GM12878 (cell line): ENCODE measurements at regions of chr12 and their contacts with region 1.

Region 1: GRCh38 chr12:92408072-92408900 is 262.6 kb upstream of the BTG1 start:
- DNase-seq: no peak
- ATAC-seq: peak; percentile 74
- H3K4me3 ChIP-seq: no peak overlapping the region
- H3K27ac ChIP-seq: peak overlapping the region; percentile 24
- H3K4me1 ChIP-seq: peaks cover 31% of the 10 kb centered on the region
- H3K27me3 ChIP-seq: no peaks in the 10 kb centered on the region
- CTCF ChIP-seq: peak; percentile 58 to 82 (median 72)
- EP300 ChIP-seq: no peak
- POLR2A ChIP-seq: no peak
- RAD21 ChIP-seq: peak; percentile 94

Region 2: DNA sequence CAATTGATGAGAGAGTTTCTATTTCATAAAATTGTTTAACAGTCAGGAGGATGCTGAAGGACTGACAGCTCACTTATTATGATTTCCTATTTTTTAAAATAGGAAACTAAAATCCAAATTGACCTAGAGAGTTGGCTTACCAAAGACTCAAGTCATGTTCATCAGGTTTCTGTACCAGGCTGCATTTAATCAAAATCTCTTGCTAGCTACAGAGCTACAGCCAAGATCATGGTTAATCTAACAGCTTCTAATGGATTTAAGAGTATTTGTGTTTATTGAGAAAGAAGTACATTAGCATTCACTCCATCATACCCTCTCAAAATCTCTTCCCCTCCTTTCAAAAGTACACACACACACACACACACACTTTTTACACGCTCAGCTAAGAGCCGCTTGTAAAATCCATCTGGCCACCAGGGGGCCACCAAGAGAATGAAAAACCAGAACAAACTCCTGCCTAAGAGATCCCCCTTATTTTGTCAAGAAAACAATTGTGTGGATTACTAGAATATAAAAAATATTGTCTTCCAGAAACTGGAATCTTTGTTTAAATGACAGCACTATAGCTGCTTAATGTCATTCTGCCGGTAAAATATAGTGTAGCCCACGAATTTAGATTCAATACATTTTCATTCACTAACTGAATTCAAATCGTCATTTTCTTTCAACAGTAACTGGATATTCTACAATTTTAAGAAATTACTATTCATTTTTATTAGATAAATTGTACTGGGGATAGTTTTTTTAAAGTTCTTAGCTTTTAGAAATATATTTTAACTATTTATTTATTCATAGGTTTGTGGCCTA is 596.6 kb before region 1 on chr12:
- CTCF ChIA-PET with region 1: interaction called, 10 read pairs
- POLR2A ChIA-PET with region 1: no interaction called
- RAD21 ChIA-PET with region 1: interaction called, 10 read pairs
- SMC1A ChIA-PET with region 1: interaction called, 22 read pairs
- in situ Hi-C with region 1: loop called (anchors 10 kb)
- intact Hi-C with region 1: loop called (anchors 5 kb)
- DNase-seq: peak; percentile 40
- ATAC-seq: peak; percentile 95
- H3K4me3 ChIP-seq: no peak overlapping the region
- H3K27ac ChIP-seq: no peak overlapping the region
- H3K4me1 ChIP-seq: no peaks in the 10 kb centered on the region
- H3K27me3 ChIP-seq: no peaks in the 10 kb centered on the region
- CTCF ChIP-seq: peak; percentile 68 to 86 (median 79)
- EP300 ChIP-seq: no peak
- POLR2A ChIP-seq: no peak
- RAD21 ChIP-seq: peak; percentile 87

Region 3: DNA sequence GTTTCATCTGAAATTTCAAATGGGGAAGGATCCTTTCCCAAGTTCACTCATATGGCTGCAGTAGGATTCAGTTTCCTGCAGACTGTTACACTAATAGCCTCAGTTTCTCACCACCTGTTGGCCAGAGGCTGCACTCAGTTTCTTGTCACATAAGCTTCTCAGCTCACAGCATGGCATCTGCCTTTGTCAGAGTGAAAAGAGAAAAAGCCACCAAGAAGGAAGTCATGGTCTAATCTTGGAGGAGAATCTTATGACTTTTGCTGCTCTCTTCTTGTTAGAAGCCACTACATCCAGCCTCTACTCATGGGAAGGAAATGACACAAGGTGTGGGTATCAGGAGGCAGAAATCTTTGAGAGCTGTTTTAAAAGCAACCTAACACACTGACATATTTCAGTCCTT is 223.2 kb before region 1 on chr12:
- CTCF ChIA-PET with region 1: no interaction called
- POLR2A ChIA-PET with region 1: no interaction called
- RAD21 ChIA-PET with region 1: interaction called, 3 read pairs
- SMC1A ChIA-PET with region 1: interaction called, 4 read pairs
- in situ Hi-C with region 1: no loop called
- intact Hi-C with region 1: loop called (anchors 5 kb)
- DNase-seq: peak; percentile 80
- ATAC-seq: peak; percentile 81
- H3K4me3 ChIP-seq: no peak overlapping the region
- H3K27ac ChIP-seq: peak overlapping the region; percentile 77
- H3K4me1 ChIP-seq: peaks cover 28% of the 10 kb centered on the region
- H3K27me3 ChIP-seq: no peaks in the 10 kb centered on the region
- CTCF ChIP-seq: no peak
- EP300 ChIP-seq: peak; percentile 14 to 61; a peak in 1 of 4 replicates
- POLR2A ChIP-seq: no peak
- RAD21 ChIP-seq: peak; percentile 13; the same call in 1 of the 2 replicates

Region 4: DNA sequence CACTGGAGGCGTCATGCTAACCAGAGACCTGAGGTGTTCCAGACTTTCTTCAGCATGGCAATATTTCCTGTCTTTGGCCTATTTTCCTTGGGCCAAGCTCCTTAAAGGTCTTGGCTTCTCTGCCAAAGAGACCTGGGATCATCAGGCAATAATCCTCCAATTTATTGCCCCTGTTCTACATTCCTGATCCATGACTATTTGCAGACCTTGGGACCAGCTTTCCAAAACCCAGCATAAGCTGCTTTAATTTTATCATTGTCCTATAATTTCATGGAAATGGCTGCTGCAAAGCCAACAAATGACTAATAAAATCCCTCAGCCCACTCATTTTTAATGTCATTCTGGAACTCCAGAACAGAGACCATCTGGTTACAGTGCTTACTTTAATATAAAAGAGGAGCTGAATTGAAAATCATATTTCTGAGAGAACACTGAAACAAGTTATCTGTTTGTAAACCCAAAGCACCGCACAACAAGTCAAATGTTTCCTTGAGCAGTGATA is 95.8 kb before region 1 on chr12:
- CTCF ChIA-PET with region 1: no interaction called
- POLR2A ChIA-PET with region 1: no interaction called
- RAD21 ChIA-PET with region 1: no interaction called
- SMC1A ChIA-PET with region 1: no interaction called
- in situ Hi-C with region 1: no loop called
- intact Hi-C with region 1: no loop called
- DNase-seq: no peak
- ATAC-seq: no peak
- H3K4me3 ChIP-seq: no peak overlapping the region
- H3K27ac ChIP-seq: no peak overlapping the region
- H3K4me1 ChIP-seq: no peaks in the 10 kb centered on the region
- H3K27me3 ChIP-seq: no peaks in the 10 kb centered on the region
- CTCF ChIP-seq: no peak
- EP300 ChIP-seq: no peak
- POLR2A ChIP-seq: no peak
- RAD21 ChIP-seq: no peak

Region 5: GRCh38 chr12:92396647-92397252 is 11.5 kb before region 1 on chr12:
- CTCF ChIA-PET with region 1: interaction called, 15 read pairs
- POLR2A ChIA-PET with region 1: interaction called, 4 read pairs
- RAD21 ChIA-PET with region 1: interaction called, 8 read pairs
- SMC1A ChIA-PET with region 1: interaction called, 16 read pairs
- in situ Hi-C with region 1: no loop called
- intact Hi-C with region 1: no loop called
- DNase-seq: no peak
- ATAC-seq: no peak
- H3K4me3 ChIP-seq: no peak overlapping the region
- H3K27ac ChIP-seq: no peak overlapping the region; the same call in 1 of the 2 replicates
- H3K4me1 ChIP-seq: peaks cover 32% of the 10 kb centered on the region
- H3K27me3 ChIP-seq: no peaks in the 10 kb centered on the region
- CTCF ChIP-seq: no peak
- EP300 ChIP-seq: no peak
- POLR2A ChIP-seq: no peak
- RAD21 ChIP-seq: no peak

Region 6: DNA sequence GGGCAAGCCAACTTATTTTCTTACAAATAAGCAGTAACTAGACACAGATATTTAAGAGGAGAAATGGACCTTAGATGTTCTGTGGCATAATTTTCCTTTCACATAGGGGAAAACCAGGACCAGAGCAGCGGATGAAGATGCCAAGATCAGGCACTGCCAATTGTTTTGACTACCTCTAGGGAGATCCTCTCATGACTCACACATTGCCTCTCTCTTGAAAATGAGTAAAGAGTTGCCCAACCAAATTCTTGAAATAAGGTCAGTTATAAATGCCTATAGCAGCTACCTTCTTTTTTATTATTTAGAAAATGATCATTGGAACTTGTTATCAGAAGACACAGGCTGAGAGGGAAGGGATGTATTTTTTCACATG is 31.1 kb after region 1 on chr12:
- CTCF ChIA-PET with region 1: interaction called, 53 read pairs
- POLR2A ChIA-PET with region 1: interaction called, 4 read pairs
- RAD21 ChIA-PET with region 1: interaction called, 41 read pairs
- SMC1A ChIA-PET with region 1: interaction called, 145 read pairs
- in situ Hi-C with region 1: no loop called
- intact Hi-C with region 1: loop called (anchors 2 kb)
- DNase-seq: no peak
- ATAC-seq: peak; percentile 15
- H3K4me3 ChIP-seq: no peak overlapping the region
- H3K27ac ChIP-seq: peak overlapping the region; percentile 29; the same call in 1 of the 2 replicates
- H3K4me1 ChIP-seq: peaks cover 59% of the 10 kb centered on the region
- H3K27me3 ChIP-seq: no peaks in the 10 kb centered on the region
- CTCF ChIP-seq: no peak
- EP300 ChIP-seq: no peak
- POLR2A ChIP-seq: no peak
- RAD21 ChIP-seq: no peak

Region 7: DNA sequence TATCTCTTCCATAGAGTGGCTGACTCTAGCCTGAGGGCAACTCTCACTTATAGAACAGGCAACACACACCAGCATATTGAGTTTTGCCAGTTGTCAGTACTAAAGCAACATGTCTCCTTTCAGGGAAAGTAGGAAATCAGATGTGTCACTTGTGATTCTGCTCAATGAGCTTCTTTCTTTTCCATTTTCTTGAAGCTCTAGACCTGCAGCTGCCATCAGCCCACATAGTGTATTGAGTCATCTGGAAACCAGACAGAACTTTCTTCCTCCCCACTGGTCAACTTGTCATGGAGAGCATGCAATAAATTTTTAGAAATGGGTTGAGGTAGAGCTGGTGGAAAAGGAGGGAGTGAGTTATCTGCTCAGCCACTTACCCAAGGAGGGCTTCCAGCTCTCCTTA is 85.5 kb after region 1 on chr12:
- CTCF ChIA-PET with region 1: interaction called, 25 read pairs
- POLR2A ChIA-PET with region 1: interaction called, 3 read pairs
- RAD21 ChIA-PET with region 1: interaction called, 21 read pairs
- SMC1A ChIA-PET with region 1: interaction called, 23 read pairs
- in situ Hi-C with region 1: no loop called
- intact Hi-C with region 1: no loop called
- DNase-seq: no peak
- ATAC-seq: peak; percentile 57
- H3K4me3 ChIP-seq: no peak overlapping the region
- H3K27ac ChIP-seq: peak overlapping the region; percentile 81
- H3K4me1 ChIP-seq: peaks cover 74% of the 10 kb centered on the region
- H3K27me3 ChIP-seq: no peaks in the 10 kb centered on the region
- CTCF ChIP-seq: no peak
- EP300 ChIP-seq: peak in 1 of 2 experiments; percentile 36; a peak in 1 of 4 replicates
- POLR2A ChIP-seq: no peak
- RAD21 ChIP-seq: no peak

Region 8: GRCh38 chr12:92561543-92561899 is 153.2 kb after region 1 on chr12:
- CTCF ChIA-PET with region 1: interaction called, 10 read pairs
- POLR2A ChIA-PET with region 1: interaction called, 4 read pairs
- RAD21 ChIA-PET with region 1: interaction called, 18 read pairs
- SMC1A ChIA-PET with region 1: interaction called, 31 read pairs
- in situ Hi-C with region 1: no loop called
- intact Hi-C with region 1: no loop called
- DNase-seq: no peak
- ATAC-seq: peak; percentile 13
- H3K4me3 ChIP-seq: peak overlapping the region; percentile 50; the same call in 1 of the 2 replicates
- H3K27ac ChIP-seq: peak overlapping the region; percentile 36
- H3K4me1 ChIP-seq: peaks cover 32% of the 10 kb centered on the region
- H3K27me3 ChIP-seq: no peaks in the 10 kb centered on the region
- CTCF ChIP-seq: no peak
- EP300 ChIP-seq: peak in 1 of 2 experiments; percentile 35; a peak in 1 of 4 replicates
- POLR2A ChIP-seq: no peak
- RAD21 ChIP-seq: no peak